Activated CD4-positive, alpha-beta memory T cell treated with anti-CD3 and anti-CD28 coated beads for 36 hours (primary cell): ENCODE measurements at regions of chr9 and their contacts with region 1.

Region 1: GRCh38 chr9:73183917-73184861 is 32.5 kb downstream of the ANXA1 start:
- DNase-seq: no peak
- H3K4me3 Mint-ChIP-seq: no peak overlapping the region
- H3K27ac Mint-ChIP-seq: no peak overlapping the region
- H3K4me1 Mint-ChIP-seq: peaks cover 2% of the 10 kb centered on the region
- H3K27me3 Mint-ChIP-seq: peaks cover 5% of the 10 kb centered on the region

Region 2: DNA sequence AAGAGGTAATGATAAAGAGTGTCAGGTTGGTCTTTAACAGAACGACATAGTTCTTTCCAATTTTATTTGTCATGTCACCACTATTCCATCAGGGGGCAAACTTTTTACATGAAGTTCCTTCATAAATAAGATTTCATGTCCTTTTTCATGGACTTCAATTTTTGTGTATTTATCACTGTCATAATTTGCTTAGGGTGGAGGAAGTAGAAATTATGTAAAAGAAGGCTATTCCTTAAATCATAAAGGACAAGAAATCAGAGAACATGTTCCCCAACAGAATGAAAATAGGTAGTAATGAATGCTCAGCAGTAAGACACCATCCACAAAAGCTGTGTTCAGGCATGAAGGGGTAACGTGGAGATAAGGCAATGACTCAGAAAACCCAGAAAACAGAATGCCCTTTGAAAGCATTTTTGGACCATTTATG is 891.9 kb before region 1 on chr9:
- CTCF ChIA-PET with region 1: no interaction called
- POLR2A ChIA-PET with region 1: no interaction called
- intact Hi-C with region 1: loop called (anchors 5 kb)
- DNase-seq: no peak
- H3K4me3 Mint-ChIP-seq: no peak overlapping the region
- H3K27ac Mint-ChIP-seq: no peak overlapping the region
- H3K4me1 Mint-ChIP-seq: no peaks in the 10 kb centered on the region
- H3K27me3 Mint-ChIP-seq: peaks cover 7% of the 10 kb centered on the region

Region 3: GRCh38 chr9:72856972-72857623 is 327.1 kb before region 1 on chr9:
- CTCF ChIA-PET with region 1: interaction called, 3 read pairs
- POLR2A ChIA-PET with region 1: no interaction called
- intact Hi-C with region 1: loop called (anchors 5 kb)
- DNase-seq: no peak
- H3K4me3 Mint-ChIP-seq: no peak overlapping the region
- H3K27ac Mint-ChIP-seq: no peak overlapping the region
- H3K4me1 Mint-ChIP-seq: no peaks in the 10 kb centered on the region
- H3K27me3 Mint-ChIP-seq: no peaks in the 10 kb centered on the region

Region 4: DNA sequence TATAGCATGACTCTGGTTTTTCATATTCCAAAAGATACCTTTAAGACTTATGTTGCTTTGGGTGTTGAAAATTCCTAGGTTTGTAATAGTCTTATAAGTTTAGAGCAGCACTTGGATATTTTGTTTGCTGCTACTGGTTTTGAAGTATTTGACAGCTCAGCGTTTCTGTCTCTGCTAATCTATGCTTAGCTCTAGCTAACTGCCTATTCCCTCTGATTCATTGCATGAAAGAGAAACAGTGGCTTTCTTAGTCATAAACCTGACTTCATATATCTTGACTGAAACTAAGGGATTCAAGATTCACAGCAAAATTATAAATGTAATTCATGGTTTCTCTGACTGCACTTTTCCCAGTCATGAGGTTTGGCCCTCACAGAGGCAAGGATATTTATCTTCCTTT is 68.2 kb before region 1 on chr9:
- CTCF ChIA-PET with region 1: interaction called, 204 read pairs
- POLR2A ChIA-PET with region 1: no interaction called
- intact Hi-C with region 1: loop called (anchors 2 kb)
- DNase-seq: no peak
- H3K4me3 Mint-ChIP-seq: no peak overlapping the region
- H3K27ac Mint-ChIP-seq: no peak overlapping the region
- H3K4me1 Mint-ChIP-seq: peaks cover 42% of the 10 kb centered on the region
- H3K27me3 Mint-ChIP-seq: no peaks in the 10 kb centered on the region